Activated CD8-positive, alpha-beta T cell treated with anti-CD3 and anti-CD28 coated beads for 36 hours (primary cell): ENCODE measurements at regions of chr1 and their contacts with region 1.

Region 1: DNA sequence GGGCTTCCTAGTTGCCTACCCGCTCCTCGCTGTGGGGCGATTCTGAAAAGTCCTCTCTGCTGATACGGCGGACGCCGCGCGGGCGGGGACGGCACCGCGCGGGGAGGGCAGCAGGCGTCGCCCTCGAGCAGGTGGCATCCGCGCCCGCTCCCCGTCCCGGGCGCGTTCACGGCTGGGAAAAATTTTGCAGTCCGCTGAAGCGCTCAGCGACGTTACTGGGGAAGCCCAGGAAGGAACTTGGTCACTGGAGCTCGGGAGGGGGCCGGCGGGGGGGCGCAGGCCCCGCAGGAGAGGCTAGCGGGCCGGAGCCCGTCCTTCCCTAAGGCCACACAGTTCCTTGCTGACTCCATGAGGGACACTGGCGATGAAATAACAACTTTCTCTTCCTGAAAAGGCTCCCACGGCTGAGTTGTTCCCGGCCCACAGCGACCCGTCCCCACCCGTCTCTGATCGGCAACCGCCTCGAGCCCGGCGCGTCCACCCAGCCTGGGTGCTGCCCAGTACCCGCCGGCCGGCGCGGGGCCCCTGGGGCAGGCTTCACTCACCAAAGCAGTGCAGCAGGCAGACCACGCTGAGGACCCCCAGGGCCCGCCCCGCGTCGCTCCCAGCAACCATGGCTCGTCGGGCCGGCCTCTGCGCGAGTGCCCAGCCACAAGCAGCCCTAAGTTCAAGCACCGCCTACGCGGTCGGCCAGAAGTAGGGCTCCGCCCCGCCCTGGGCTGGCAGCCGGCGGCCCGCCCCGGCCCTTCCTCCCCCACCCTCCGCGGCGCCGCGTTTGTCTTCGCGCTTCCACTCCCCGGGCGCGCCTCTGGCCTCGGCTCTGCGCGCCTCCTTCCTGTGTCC is at the start of gene CD58:
- DNase-seq: peak; percentile 94
- ATAC-seq: peak; percentile 84
- H3K4me3 Mint-ChIP-seq: peak within 1 kb of the TSS; percentile 91
- H3K27ac Mint-ChIP-seq: peak within 1 kb of the TSS; percentile 88
- H3K4me1 Mint-ChIP-seq: peaks cover 55% of the 10 kb centered on the region
- H3K27me3 Mint-ChIP-seq: peaks cover 8% of the 10 kb centered on the region
- CTCF ChIP-seq: peak; percentile 85
- total RNA-seq, gene CD58: 11.1 to 12.7 TPM

Region 2: GRCh38 chr1:116159177-116159576 is 411.4 kb before region 1 on chr1:
- CTCF ChIA-PET with region 1: no interaction called
- POLR2A ChIA-PET with region 1: no interaction called
- intact Hi-C with region 1: no loop called
- DNase-seq: no peak
- ATAC-seq: no peak
- H3K4me3 Mint-ChIP-seq: no peak overlapping the region
- H3K27ac Mint-ChIP-seq: no peak overlapping the region
- H3K4me1 Mint-ChIP-seq: no peaks in the 10 kb centered on the region
- H3K27me3 Mint-ChIP-seq: no peaks in the 10 kb centered on the region
- CTCF ChIP-seq: no peak

Region 3: DNA sequence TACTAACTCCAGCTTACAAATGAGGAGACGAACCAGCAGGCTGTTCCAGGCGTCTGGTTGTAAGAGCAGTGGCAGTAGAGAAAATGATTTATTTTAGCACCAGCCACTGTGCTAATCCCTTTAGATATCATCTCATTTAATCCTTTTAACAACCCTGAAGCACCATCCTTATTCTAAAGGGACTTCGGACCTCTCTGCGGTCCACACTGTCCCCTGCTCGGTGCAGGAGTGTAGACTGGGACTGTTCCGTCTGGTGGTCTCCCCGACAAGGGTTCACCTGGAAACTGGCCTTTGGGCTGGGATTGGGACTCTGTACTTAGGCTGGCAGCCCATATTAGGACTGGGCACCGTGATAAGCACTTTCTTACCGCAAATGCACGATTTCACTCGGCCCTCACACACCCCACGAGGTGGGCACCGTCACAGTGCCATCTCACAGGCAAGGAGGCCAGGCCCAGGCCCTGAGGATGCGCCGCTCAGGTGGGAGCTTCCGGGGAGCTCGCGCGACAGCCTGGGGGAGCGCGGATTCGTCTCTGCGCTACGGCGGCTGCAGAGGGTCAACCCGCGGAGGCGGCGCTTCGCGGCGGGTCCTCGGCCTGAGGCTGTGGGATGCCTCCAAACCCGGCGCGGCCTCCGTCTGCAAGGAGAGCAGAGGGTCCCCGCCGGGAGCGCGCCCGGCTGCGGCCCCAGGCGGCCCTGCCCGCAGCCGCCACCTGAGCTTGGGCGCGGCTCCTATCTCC is 152.3 kb before region 1 on chr1:
- CTCF ChIA-PET with region 1: no interaction called
- POLR2A ChIA-PET with region 1: no interaction called
- intact Hi-C with region 1: no loop called
- DNase-seq: peak; percentile 91
- ATAC-seq: peak; percentile 95
- H3K4me3 Mint-ChIP-seq: peak overlapping the region; percentile 91
- H3K27ac Mint-ChIP-seq: peak overlapping the region; percentile 91
- H3K4me1 Mint-ChIP-seq: peaks cover 43% of the 10 kb centered on the region
- H3K27me3 Mint-ChIP-seq: no peaks in the 10 kb centered on the region
- CTCF ChIP-seq: no peak

Region 4: GRCh38 chr1:116556289-116557006 is 14.1 kb before region 1 on chr1:
- CTCF ChIA-PET with region 1: interaction called, 10 read pairs
- POLR2A ChIA-PET with region 1: interaction called, 11 read pairs
- intact Hi-C with region 1: no loop called
- DNase-seq: peak; percentile 84
- ATAC-seq: peak; percentile 95
- H3K4me3 Mint-ChIP-seq: peak overlapping the region; percentile 40
- H3K27ac Mint-ChIP-seq: peak overlapping the region; percentile 92
- H3K4me1 Mint-ChIP-seq: peaks cover 68% of the 10 kb centered on the region
- H3K27me3 Mint-ChIP-seq: no peaks in the 10 kb centered on the region
- CTCF ChIP-seq: no peak

Region 5: GRCh38 chr1:116674011-116674531 is 103.5 kb after region 1 on chr1:
- CTCF ChIA-PET with region 1: interaction called, 43 read pairs
- POLR2A ChIA-PET with region 1: no interaction called
- intact Hi-C with region 1: loop called (anchors 5 kb)
- DNase-seq: no peak
- ATAC-seq: no peak
- H3K4me3 Mint-ChIP-seq: no peak overlapping the region
- H3K27ac Mint-ChIP-seq: no peak overlapping the region
- H3K4me1 Mint-ChIP-seq: peaks cover 2% of the 10 kb centered on the region
- H3K27me3 Mint-ChIP-seq: peaks cover 39% of the 10 kb centered on the region
- CTCF ChIP-seq: no peak

Region 6: DNA sequence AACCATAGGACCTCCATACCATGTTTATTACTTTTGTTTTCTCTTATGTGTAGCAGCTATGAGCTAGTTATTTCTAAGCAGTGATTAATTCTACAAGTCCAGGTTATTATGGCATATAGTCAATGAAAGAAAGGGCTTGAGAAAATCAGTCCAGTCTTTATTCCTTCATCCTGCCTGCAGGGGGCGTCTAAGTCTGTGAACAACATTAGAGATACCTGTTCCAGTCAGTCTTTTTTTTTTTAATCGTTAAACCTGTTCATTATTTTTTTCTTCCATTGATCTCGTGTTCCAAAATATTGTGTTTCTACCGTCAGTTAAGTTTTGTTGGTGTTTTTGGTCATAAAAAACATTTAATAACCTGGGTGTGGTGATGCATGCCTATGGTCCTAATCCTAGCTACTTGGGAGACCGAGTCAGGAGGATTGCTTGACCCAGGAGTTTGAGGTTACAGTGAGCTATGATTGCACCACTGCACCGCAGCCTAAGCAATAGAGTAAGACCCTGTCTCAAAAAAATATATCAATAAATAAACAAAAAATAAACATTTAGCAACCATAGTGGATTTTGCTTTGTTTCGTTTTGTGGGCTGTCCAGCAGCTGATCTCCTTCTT is 154.3 kb after region 1 on chr1:
- CTCF ChIA-PET with region 1: interaction called, 23 read pairs
- POLR2A ChIA-PET with region 1: no interaction called
- intact Hi-C with region 1: no loop called
- DNase-seq: peak; percentile 92
- ATAC-seq: peak; percentile 84
- H3K4me3 Mint-ChIP-seq: no peak overlapping the region
- H3K27ac Mint-ChIP-seq: peak overlapping the region; percentile 28
- H3K4me1 Mint-ChIP-seq: peaks cover 34% of the 10 kb centered on the region
- H3K27me3 Mint-ChIP-seq: no peaks in the 10 kb centered on the region
- CTCF ChIP-seq: peak; percentile 90

Region 7: GRCh38 chr1:117054068-117054467 is 483.5 kb after region 1 on chr1:
- CTCF ChIA-PET with region 1: interaction called, 7 read pairs
- POLR2A ChIA-PET with region 1: interaction called, 9 read pairs
- intact Hi-C with region 1: loop called (anchors 2 kb)
- DNase-seq: no peak
- ATAC-seq: no peak
- H3K4me3 Mint-ChIP-seq: no peak overlapping the region
- H3K27ac Mint-ChIP-seq: no peak overlapping the region
- H3K4me1 Mint-ChIP-seq: peaks cover 54% of the 10 kb centered on the region
- H3K27me3 Mint-ChIP-seq: no peaks in the 10 kb centered on the region
- CTCF ChIP-seq: no peak